ENCODE measurements at regions of chr4 and their contacts with region 1.

Region 1: DNA sequence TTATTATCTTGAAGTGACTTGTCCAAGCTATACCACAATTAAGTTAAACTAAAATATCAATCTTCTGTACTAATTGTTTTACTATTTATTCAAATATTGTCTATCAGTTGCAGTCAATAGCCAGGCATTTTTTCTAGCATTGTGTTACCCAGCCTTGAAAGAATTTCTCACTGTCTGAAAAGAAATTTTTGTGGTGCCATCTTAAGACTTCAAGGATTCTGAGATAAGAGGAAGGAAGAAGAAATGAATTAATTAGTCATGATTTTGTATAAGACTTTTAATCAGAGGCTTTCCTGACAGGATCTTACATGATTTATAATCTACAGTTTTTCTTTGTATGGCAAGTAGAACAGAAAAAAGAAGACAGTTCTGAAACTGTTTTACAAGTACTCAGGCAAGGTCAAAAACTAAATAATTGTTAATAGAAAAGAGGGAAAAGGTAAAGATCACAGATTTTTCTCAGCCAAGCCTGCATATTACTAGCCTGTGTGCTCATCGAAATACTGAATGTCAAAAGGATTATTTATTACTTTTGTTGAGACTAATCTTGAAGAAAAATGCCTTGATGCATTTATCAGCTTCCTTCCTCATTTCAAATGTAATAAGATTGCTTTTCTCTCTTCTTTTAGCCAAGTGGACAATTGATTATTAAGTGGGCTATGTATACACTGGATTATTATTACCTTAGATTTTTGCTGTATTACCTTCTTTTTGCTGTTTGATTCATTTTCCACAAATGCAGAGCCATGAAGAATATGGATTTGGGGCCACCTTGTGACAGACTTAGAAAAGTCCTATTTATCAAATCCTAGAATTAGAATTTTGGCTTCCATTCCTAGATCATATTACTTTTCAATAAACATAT is 53.8 kb downstream of the CXCL1 start:
- DNase-seq: no peak
- ATAC-seq: no peak
- H3K4me3 ChIP-seq: no peak overlapping the region
- H3K4me3 Mint-ChIP-seq: no peak overlapping the region
- H3K27ac ChIP-seq: no peak overlapping the region
- H3K27ac Mint-ChIP-seq: no peak overlapping the region
- H3K4me1 ChIP-seq: no peaks in the 10 kb centered on the region
- H3K4me1 Mint-ChIP-seq: no peaks in the 10 kb centered on the region
- H3K27me3 ChIP-seq: no peaks in the 10 kb centered on the region
- H3K27me3 Mint-ChIP-seq: no peaks in the 10 kb centered on the region
- CTCF ChIP-seq: no peak

Region 2: DNA sequence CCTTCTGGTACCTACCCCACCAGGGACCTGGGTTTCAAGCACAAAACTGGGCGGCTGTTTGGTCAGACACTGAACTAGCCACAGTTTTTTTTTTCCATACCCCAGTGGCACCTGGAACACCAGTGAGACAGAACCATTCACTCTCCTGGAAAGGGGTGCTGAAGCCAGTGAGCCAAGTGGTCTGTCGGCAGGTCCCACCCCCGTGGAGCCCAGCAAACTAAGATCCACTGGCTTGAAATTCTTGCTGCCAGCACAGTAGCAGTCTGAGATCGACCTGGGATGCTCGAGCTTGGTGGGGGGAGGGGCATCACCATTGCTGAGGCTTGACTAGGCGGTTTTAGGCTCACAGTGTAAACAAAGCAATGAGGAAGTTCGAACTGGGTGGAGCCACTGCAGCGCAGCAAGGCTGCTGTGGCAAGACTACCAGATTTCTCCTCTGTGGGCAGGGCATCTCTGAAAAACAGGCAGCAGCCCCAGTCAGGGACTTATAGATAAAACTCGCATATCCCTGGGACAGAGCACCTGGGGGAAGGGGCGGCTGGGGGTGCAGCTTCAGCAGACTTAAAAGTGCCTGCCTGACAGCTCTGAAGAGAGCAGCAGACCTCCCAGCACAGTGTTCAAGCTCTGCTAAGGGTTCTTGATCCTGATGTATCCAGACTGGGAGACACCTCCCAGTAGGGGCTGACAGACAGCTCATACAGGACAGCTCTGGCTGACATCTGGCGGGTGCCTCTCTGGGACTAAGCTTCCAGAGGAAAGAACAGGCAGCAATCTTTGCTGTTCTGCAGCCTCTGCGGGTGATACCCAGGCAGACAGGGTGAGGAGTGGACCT is 1076.5 kb before region 1 on chr4:
- CTCF ChIA-PET with region 1: no interaction called
- POLR2A ChIA-PET with region 1: no interaction called
- intact Hi-C with region 1: loop called in 1 of 2 experiments (anchors 5 kb)
- DNase-seq: no peak
- ATAC-seq: no peak
- H3K4me3 ChIP-seq: no peak overlapping the region
- H3K4me3 Mint-ChIP-seq: no peak overlapping the region
- H3K27ac ChIP-seq: no peak overlapping the region
- H3K27ac Mint-ChIP-seq: no peak overlapping the region
- H3K4me1 ChIP-seq: no peaks in the 10 kb centered on the region
- H3K4me1 Mint-ChIP-seq: no peaks in the 10 kb centered on the region
- H3K27me3 ChIP-seq: no peaks in the 10 kb centered on the region
- H3K27me3 Mint-ChIP-seq: peaks cover 7% of the 10 kb centered on the region
- CTCF ChIP-seq: no peak

Region 3: GRCh38 chr4:73964862-73965611 is 42.0 kb after region 1 on chr4:
- CTCF ChIA-PET with region 1: no interaction called
- POLR2A ChIA-PET with region 1: no interaction called
- intact Hi-C with region 1: no loop called
- DNase-seq: no peak
- ATAC-seq: no peak
- H3K4me3 ChIP-seq: no peak overlapping the region
- H3K4me3 Mint-ChIP-seq: no peak overlapping the region
- H3K27ac ChIP-seq: no peak overlapping the region
- H3K27ac Mint-ChIP-seq: no peak overlapping the region
- H3K4me1 ChIP-seq: no peaks in the 10 kb centered on the region
- H3K4me1 Mint-ChIP-seq: no peaks in the 10 kb centered on the region
- H3K27me3 ChIP-seq: no peaks in the 10 kb centered on the region
- H3K27me3 Mint-ChIP-seq: no peaks in the 10 kb centered on the region
- CTCF ChIP-seq: no peak

Measured in CD8-positive, alpha-beta T cell (primary cell).